ENCODE measurements at regions of chr10 and their contacts with region 1.

Region 1: GRCh38 chr10:132637477-132638129 is 100.0 kb downstream of the INPP5A start:
- DNase-seq: peak in 1 of 6 donors; percentile 44
- ATAC-seq: peak; percentile 53 to 87 (median 82)
- H3K4me3 ChIP-seq: no peak overlapping the region
- H3K27ac ChIP-seq: no peak overlapping the region
- H3K4me1 ChIP-seq: peaks cover 0 to 3% (median under 1%) of the 10 kb centered on the region in 3 donors
- H3K27me3 ChIP-seq: no peaks in the 10 kb centered on the region
- CTCF ChIP-seq: peak in 3 of 4 donors; percentile 23 to 54 (median 51)

Region 2: DNA sequence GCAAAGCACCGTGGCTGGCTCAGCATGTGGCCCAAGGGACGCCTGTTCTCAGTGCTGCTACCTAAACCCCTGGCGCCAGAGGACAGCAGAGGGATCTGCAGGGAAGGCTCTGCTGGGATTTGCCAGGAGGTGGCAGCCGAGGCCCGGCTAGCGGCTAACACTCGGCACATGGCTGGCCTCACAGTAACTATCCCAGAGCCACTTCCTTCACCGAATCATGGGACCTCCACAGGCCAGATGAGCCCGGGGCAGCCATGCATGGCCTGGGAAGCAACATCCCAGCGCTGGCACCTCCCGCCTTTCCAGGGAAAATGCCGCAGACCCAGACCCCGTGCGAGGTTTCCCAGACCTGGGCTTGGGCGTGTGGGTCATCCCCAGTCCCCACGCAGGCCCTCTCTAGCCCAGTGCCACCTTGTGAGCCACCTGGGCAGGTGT is 414.4 kb before region 1 on chr10:
- intact Hi-C with region 1: loop called in 1 of 3 experiments (anchors 10 kb)
- DNase-seq: peak; percentile 60 to 92 (median 80)
- ATAC-seq: peak; percentile 92 to 99 (median 98)
- H3K4me3 ChIP-seq: no peak overlapping the region
- H3K27ac ChIP-seq: no peak overlapping the region
- H3K4me1 ChIP-seq: no peaks in the 10 kb centered on the region
- H3K27me3 ChIP-seq: no peaks in the 10 kb centered on the region
- CTCF ChIP-seq: peak; percentile 64 to 86 (median 84)

Region 3: GRCh38 chr10:132452631-132453469 is 184.8 kb before region 1 on chr10:
- intact Hi-C with region 1: loop called (anchors 5 to 10 kb)
- DNase-seq: peak; percentile 92 to 99 (median 96)
- ATAC-seq: peak; percentile 78 to 90 (median 87)
- H3K4me3 ChIP-seq: peak overlapping the region in 2 of 4 donors; percentile 5 to 34
- H3K27ac ChIP-seq: peak overlapping the region in 3 of 4 donors; percentile 25 to 51 (median 50)
- H3K4me1 ChIP-seq: peaks cover 18 to 22% (median 19%) of the 10 kb centered on the region in 3 donors
- H3K27me3 ChIP-seq: no peaks in the 10 kb centered on the region
- CTCF ChIP-seq: peak; percentile 98 to 99 (median 99)

Measured in pancreas (tissue), 10 donors.